ENCODE measurements at regions of chr9 and their contacts with region 1.

Region 1: DNA sequence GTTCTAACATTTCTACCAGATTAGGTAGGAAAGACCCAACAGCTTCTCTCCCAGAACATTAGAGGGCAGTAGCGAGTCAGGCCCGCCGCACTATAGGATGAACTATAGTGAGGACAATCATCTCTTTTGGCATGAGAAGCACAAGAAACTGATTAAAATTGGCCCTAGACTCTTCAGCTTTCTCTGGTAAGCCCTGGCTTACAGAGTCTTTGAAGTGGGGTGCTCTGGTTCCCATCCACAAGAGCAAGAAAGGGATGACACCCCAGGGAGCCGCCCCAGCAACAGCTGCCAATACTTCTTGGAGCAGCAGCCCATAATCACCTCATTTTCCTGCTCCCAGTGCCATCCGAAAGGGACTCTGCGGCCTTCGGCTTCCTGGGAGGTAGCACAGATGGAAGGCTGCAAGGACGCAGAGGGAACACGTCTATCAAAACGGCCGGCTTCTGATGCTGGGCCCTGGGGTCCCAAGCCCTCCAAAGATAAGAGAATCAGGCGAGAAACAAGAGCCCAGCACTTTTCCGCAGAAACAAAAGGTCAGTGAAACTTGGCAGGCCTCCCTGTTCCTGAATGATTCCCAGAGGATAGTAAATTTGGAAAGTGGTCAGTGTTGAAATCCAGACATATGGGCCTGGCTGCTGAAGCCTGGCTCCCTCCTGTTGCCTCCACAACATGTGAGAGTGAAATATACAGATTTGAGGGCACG is 69.3 kb downstream of the HSD17B3 start:
- DNase-seq: peak; percentile 53 to 59
- H3K4me3 ChIP-seq: no peak overlapping the region
- H3K4me3 Mint-ChIP-seq: no peak overlapping the region
- H3K27ac Mint-ChIP-seq: no peak overlapping the region
- H3K4me1 ChIP-seq: 0 out of 2 replicates have a peak, but pooled peaks cover 6% of the 10 kb centered on the region
- H3K4me1 Mint-ChIP-seq: peaks cover 8% of the 10 kb centered on the region
- H3K27me3 ChIP-seq: no peaks in the 10 kb centered on the region
- H3K27me3 Mint-ChIP-seq: no peaks in the 10 kb centered on the region
- CTCF ChIP-seq: peak; percentile 90

Region 2: GRCh38 chr9:96317335-96317980 is 84.8 kb after region 1 on chr9:
- CTCF ChIA-PET with region 1: interaction called, 18 read pairs
- POLR2A ChIA-PET with region 1: no interaction called
- intact Hi-C with region 1: loop called (anchors 1 kb)
- DNase-seq: peak in 1 of 2 experiments; percentile 49
- H3K4me3 ChIP-seq: no peak overlapping the region
- H3K4me3 Mint-ChIP-seq: peak overlapping the region; percentile 17
- H3K27ac Mint-ChIP-seq: peak overlapping the region; percentile 65
- H3K4me1 ChIP-seq: 0 out of 2 replicates have a peak, but pooled peaks cover 3% of the 10 kb centered on the region
- H3K4me1 Mint-ChIP-seq: peaks cover 7% of the 10 kb centered on the region
- H3K27me3 ChIP-seq: no peaks in the 10 kb centered on the region
- H3K27me3 Mint-ChIP-seq: no peaks in the 10 kb centered on the region
- CTCF ChIP-seq: peak; percentile 74 to 87

Measured in Caco-2 (cell line).